Calu3 (cell line): ENCODE measurements at regions of chr1 and their contacts with region 1.

Region 1: DNA sequence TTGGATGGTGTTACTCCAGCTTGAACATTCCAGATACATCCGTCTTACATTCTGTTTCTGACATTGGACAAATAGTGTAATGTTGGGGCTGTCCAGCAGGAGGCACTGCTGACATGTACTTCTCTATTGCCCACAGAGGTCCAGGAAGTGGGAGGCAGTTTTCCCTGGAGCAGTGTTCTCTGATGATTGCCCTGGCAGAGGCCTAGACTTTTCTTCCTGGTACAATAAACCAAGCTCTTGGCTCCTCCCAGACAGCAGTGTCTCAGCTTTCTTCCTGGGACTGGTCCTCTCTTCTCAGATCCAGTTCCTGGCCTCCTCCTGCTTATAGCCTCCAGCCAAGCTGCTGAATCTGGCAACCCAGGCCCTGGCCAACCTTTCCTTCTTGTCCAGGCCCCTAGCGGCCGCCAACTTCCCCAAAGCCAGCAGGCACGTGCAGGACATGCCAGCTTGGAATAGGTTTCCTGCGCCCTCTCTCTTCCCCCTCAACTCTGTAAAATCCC is 14.9 kb upstream of the IFNLR1 start:
- DNase-seq: peak; percentile 78
- H3K4me3 Mint-ChIP-seq: no peak overlapping the region
- H3K27ac Mint-ChIP-seq: no peak overlapping the region
- H3K4me1 Mint-ChIP-seq: peaks cover 21% of the 10 kb centered on the region
- H3K27me3 Mint-ChIP-seq: no peaks in the 10 kb centered on the region
- CTCF ChIP-seq: peak; percentile 65

Region 2: GRCh38 chr1:24070821-24071393 is 131.1 kb before region 1 on chr1:
- CTCF ChIA-PET with region 1: interaction called, 3 read pairs
- intact Hi-C with region 1: loop called (anchors 10 kb)
- DNase-seq: peak; percentile 80
- H3K4me3 Mint-ChIP-seq: no peak overlapping the region
- H3K27ac Mint-ChIP-seq: no peak overlapping the region
- H3K4me1 Mint-ChIP-seq: no peaks in the 10 kb centered on the region
- H3K27me3 Mint-ChIP-seq: no peaks in the 10 kb centered on the region
- CTCF ChIP-seq: peak; percentile 68

Region 3: GRCh38 chr1:24150234-24151174 is 51.5 kb before region 1 on chr1:
- CTCF ChIA-PET with region 1: interaction called, 16 read pairs
- intact Hi-C with region 1: no loop called
- DNase-seq: peak; percentile 92
- H3K4me3 Mint-ChIP-seq: peak overlapping the region; percentile 66
- H3K27ac Mint-ChIP-seq: peak overlapping the region; percentile 48
- H3K4me1 Mint-ChIP-seq: peaks cover 20% of the 10 kb centered on the region
- H3K27me3 Mint-ChIP-seq: no peaks in the 10 kb centered on the region
- CTCF ChIP-seq: peak; percentile 79

Region 4: GRCh38 chr1:24283326-24284155 is 81.5 kb after region 1 on chr1:
- CTCF ChIA-PET with region 1: interaction called, 6 read pairs
- intact Hi-C with region 1: loop called (anchors 5 kb)
- DNase-seq: peak; percentile 39
- H3K4me3 Mint-ChIP-seq: no peak overlapping the region
- H3K27ac Mint-ChIP-seq: peak overlapping the region; percentile 31
- H3K4me1 Mint-ChIP-seq: peaks cover 34% of the 10 kb centered on the region
- H3K27me3 Mint-ChIP-seq: no peaks in the 10 kb centered on the region
- CTCF ChIP-seq: no peak

Region 5: DNA sequence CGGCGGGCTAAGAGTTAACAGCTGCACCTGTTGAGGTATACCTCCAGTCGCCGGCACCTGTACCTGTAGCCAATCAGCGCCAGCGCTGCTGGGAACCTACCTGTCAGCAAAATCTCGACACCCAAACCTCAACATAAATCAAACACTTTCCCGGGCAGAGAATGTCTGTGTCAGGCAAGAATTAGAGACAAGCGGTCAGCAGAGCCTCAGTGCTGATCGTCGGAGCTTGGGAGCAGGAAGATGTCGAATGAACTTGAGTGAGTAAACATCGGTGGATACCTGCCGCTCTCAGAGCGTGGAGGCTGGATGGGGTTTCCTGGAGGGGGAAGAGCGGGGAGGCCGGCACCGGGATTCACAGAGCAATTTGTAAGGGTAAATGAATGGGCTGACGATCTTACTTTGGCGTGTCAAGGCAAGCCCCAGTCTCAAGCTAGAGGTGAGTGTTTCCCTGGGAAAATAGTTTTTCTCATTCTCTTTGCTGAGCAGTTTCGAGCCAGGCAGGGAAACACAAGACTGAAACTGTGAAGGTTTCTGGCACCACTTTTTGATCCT is 117.4 kb after region 1 on chr1 and contains the start of gene GRHL3:
- CTCF ChIA-PET with region 1: interaction called, 7 read pairs
- intact Hi-C with region 1: loop called (anchors 5 kb)
- DNase-seq: peak; percentile 62
- H3K4me3 Mint-ChIP-seq: peak within 1 kb of the TSS; percentile 79
- H3K27ac Mint-ChIP-seq: peak within 1 kb of the TSS; percentile 66
- H3K4me1 Mint-ChIP-seq: peaks cover 31% of the 10 kb centered on the region
- H3K27me3 Mint-ChIP-seq: no peaks in the 10 kb centered on the region
- CTCF ChIP-seq: no peak
- total RNA-seq, gene GRHL3: 1.4 and 2.9 TPM in 2 replicates

Region 6: DNA sequence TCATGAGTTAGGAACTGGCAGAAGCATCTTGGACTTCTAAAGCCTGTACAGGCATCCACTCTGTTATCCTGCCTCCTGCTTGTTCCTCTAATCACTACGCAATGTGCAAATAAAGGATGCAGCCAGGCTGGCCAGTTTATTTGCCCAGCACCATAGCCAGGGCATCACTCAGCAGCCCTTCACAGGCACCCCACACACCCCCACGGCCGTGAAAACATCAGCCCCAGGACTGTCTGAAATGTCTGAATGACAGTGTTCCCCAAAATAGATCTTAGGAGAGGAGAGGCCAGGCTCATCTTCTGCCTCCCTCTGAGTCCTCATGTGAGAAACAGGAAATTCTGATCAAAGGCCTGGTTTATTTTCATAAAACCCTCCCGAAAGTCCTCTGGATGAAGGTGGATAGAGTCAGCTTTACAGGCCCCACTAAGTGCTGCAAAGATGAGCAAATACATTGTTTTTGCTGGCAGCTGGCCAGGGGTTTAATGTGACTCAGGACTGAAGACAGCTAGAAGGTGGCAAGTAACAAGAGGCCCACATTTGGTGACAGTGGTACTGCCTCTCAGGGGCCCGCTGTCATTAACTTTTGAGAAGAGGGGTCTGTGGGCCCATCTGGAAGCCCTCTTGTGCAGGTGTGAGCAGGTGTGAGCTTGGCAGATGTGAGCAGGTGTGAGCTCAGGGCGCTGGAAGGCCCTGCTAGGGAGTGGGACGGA is 150.1 kb after region 1 on chr1:
- CTCF ChIA-PET with region 1: no interaction called
- intact Hi-C with region 1: no loop called
- DNase-seq: no peak
- H3K4me3 Mint-ChIP-seq: no peak overlapping the region
- H3K27ac Mint-ChIP-seq: no peak overlapping the region
- H3K4me1 Mint-ChIP-seq: no peaks in the 10 kb centered on the region
- H3K27me3 Mint-ChIP-seq: no peaks in the 10 kb centered on the region
- CTCF ChIP-seq: no peak

Region 7: GRCh38 chr1:24391882-24392603 is 190.1 kb after region 1 on chr1:
- CTCF ChIA-PET with region 1: interaction called, 157 read pairs
- intact Hi-C with region 1: loop called (anchors 1 kb)
- DNase-seq: peak; percentile 63
- H3K4me3 Mint-ChIP-seq: no peak overlapping the region
- H3K27ac Mint-ChIP-seq: peak overlapping the region; percentile 54
- H3K4me1 Mint-ChIP-seq: peaks cover 45% of the 10 kb centered on the region
- H3K27me3 Mint-ChIP-seq: no peaks in the 10 kb centered on the region
- CTCF ChIP-seq: peak; percentile 52